Heart left ventricle (tissue), 16 donors: ENCODE measurements at regions of chr10 and their contacts with region 1.

Region 1: GRCh38 chr10:511101-511848 is 178.2 kb downstream of the DIP2C start:
- DNase-seq: peak; percentile 91 to 96 (median 95)
- ATAC-seq: peak; percentile 91 to 94 (median 92)
- H3K4me3 ChIP-seq: peak overlapping the region in 2 of 12 donors; percentile 0 to 31
- H3K27ac ChIP-seq: peak overlapping the region in 9 of 12 donors; percentile 4 to 86 (median 54)
- H3K4me1 ChIP-seq: peaks cover 0 to 54% (median 24%) of the 10 kb centered on the region in 12 donors
- H3K27me3 ChIP-seq: no peaks in the 10 kb centered on the region
- CTCF ChIP-seq: peak in 11 of 12 donors; percentile 93 to 99 (median 97)
- POLR2A ChIP-seq: no peak

Region 2: GRCh38 chr10:490891-491581 is 20.2 kb before region 1 on chr10:
- intact Hi-C with region 1: loop called in 1 of 10 experiments (anchors 2 kb)
- DNase-seq: peak; percentile 43 to 76 (median 59)
- ATAC-seq: peak in 3 of 4 donors; percentile 68 to 69 (median 69)
- H3K4me3 ChIP-seq: peak overlapping the region in 3 of 12 donors; percentile 28 to 41 (median 29)
- H3K27ac ChIP-seq: peak overlapping the region in 10 of 12 donors; percentile 13 to 90 (median 56)
- H3K4me1 ChIP-seq: peaks cover 0 to 55% (median 25%) of the 10 kb centered on the region in 12 donors
- H3K27me3 ChIP-seq: no peaks in the 10 kb centered on the region
- CTCF ChIP-seq: no peak
- POLR2A ChIP-seq: no peak

Region 3: DNA sequence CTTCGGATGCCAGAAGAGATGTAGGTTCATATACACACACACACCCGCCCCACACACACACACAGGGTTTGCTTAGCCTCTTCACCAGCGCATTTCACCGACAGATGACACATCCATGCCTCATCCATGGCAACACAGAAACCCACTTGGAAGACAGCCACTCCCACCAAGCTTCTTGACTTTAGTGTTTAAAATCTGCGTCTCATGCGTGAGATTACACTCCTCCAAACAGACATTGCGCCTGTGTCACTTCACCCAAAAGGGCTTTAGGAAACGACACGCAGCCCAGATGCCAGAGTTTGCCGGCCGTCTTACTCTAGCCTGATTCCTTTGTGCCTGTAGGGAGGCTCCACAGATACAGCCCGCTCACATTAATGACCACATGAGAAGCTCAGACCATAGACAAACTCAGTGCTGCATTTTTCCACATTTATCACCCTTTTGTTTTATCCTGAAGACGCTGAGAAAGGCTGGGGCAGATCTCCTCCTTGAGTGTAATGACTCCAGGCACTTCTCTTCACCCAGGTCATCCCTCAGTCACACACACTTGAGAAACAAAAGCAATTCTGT is 104.4 kb after region 1 on chr10:
- intact Hi-C with region 1: loop called in 1 of 10 experiments (anchors 10 kb)
- DNase-seq: no peak
- ATAC-seq: no peak
- H3K4me3 ChIP-seq: no peak overlapping the region
- H3K27ac ChIP-seq: peak overlapping the region in 1 of 12 donors; percentile 70
- H3K4me1 ChIP-seq: peaks cover 0 to 78% (median 44%) of the 10 kb centered on the region in 12 donors
- H3K27me3 ChIP-seq: no peaks in the 10 kb centered on the region
- CTCF ChIP-seq: no peak
- POLR2A ChIP-seq: no peak

Region 4: DNA sequence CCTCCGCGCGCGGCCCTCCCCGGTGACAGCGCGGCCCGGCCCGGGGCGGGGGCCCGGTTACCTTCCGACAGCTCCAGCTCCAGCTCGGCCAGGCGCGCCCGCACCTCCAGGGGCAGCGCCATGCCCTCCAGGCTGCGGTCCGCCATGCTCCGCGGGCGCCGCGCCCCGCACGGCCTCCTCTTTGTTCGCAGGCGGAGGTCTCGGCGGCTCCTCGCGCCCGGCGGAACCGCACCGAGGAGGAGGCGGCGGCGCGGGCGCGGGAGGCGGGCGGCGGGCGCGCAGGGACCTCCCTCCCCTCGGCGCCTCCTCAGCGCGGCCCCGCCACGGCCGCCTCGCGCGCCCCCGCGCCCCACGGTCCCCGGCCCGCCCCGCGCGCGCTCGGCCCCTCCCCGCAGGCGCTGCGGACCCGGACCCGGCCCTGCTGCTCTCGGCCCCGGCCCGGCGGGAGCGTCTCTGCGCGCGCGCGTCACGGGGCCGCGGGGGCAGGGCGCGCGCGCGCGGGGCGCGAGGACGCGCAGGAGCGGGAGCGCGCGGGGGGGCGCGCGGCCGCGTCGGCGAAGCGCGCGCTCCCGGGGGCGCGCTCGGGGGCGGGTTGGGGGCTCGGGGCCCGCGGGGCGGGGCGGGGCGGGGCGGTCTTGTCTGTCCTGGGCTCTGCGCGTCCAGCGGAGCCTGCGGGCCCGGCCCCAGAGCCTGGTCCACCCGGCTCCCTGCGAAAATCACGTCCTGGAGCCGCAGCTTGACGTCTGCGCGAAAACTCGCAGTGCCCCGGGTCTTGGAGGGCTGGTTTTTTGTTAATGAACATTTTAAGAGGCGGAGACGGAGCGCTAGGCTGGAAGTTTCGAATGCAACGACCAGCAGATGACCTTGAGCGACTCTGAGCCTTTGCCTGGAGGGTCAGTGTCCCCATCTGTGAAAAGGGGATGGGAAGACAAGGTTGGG is 178.4 kb after region 1 on chr10 and contains the start of gene DIP2C:
- intact Hi-C with region 1: loop called in 9 of 10 experiments (anchors 2 to 10 kb)
- DNase-seq: peak; percentile 77 to 88 (median 81)
- ATAC-seq: peak; percentile 79 to 90 (median 82)
- H3K4me3 ChIP-seq: peak within 1 kb of the TSS; percentile 67 to 98 (median 87)
- H3K27ac ChIP-seq: peak within 1 kb of the TSS; percentile 71 to 93 (median 88)
- H3K4me1 ChIP-seq: peaks cover 0 to 22% (median 13%) of the 10 kb centered on the region in 12 donors
- H3K27me3 ChIP-seq: peaks cover 0 to 12% (median 0%) of the 10 kb centered on the region in 9 donors
- CTCF ChIP-seq: no peak
- POLR2A ChIP-seq: peak in 1 of 2 donors; percentile 47
- total RNA-seq, gene DIP2C: 23.2 to 43.1 (median 30.3) TPM

Region 5: GRCh38 chr10:784403-785088 is 273.3 kb after region 1 on chr10:
- intact Hi-C with region 1: loop called in 6 of 10 experiments (anchors 1 to 5 kb)
- DNase-seq: peak in 3 of 5 donors; percentile 49 to 81 (median 77)
- ATAC-seq: peak in 3 of 4 donors; percentile 57 to 89 (median 63)
- H3K4me3 ChIP-seq: peak overlapping the region in 11 of 12 donors; percentile 16 to 55 (median 44)
- H3K27ac ChIP-seq: peak overlapping the region in 2 of 12 donors; percentile 11 to 22
- H3K4me1 ChIP-seq: peaks cover 0 to 27% (median 6%) of the 10 kb centered on the region in 12 donors
- H3K27me3 ChIP-seq: peaks cover 0 to 17% (median 0%) of the 10 kb centered on the region in 9 donors
- CTCF ChIP-seq: peak in 2 of 12 donors; percentile 12 to 23
- POLR2A ChIP-seq: no peak

Region 6: GRCh38 chr10:794466-794865 is 283.2 kb after region 1 on chr10:
- intact Hi-C with region 1: loop called (anchors 1 to 10 kb)
- DNase-seq: peak in 1 of 5 donors; percentile 19
- ATAC-seq: peak; percentile 29 to 86 (median 64)
- H3K4me3 ChIP-seq: no peak overlapping the region
- H3K27ac ChIP-seq: no peak overlapping the region
- H3K4me1 ChIP-seq: peaks cover 0 to 5% (median 0%) of the 10 kb centered on the region in 12 donors
- H3K27me3 ChIP-seq: no peaks in the 10 kb centered on the region
- CTCF ChIP-seq: peak in 9 of 12 donors; percentile 11 to 59 (median 33)
- POLR2A ChIP-seq: no peak

Region 7: GRCh38 chr10:810351-810846 is 299.1 kb after region 1 on chr10:
- intact Hi-C with region 1: loop called in 1 of 10 experiments (anchors 1 kb)
- DNase-seq: no peak
- ATAC-seq: peak; percentile 28 to 76 (median 58)
- H3K4me3 ChIP-seq: no peak overlapping the region
- H3K27ac ChIP-seq: peak overlapping the region in 9 of 12 donors; percentile 2 to 66 (median 32)
- H3K4me1 ChIP-seq: peaks cover 0 to 14% (median under 1%) of the 10 kb centered on the region in 12 donors
- H3K27me3 ChIP-seq: no peaks in the 10 kb centered on the region
- CTCF ChIP-seq: peak in 9 of 12 donors; percentile 8 to 51 (median 41)
- POLR2A ChIP-seq: no peak